ENCODE measurements at regions of chr16 and their contacts with region 1.

Region 1: DNA sequence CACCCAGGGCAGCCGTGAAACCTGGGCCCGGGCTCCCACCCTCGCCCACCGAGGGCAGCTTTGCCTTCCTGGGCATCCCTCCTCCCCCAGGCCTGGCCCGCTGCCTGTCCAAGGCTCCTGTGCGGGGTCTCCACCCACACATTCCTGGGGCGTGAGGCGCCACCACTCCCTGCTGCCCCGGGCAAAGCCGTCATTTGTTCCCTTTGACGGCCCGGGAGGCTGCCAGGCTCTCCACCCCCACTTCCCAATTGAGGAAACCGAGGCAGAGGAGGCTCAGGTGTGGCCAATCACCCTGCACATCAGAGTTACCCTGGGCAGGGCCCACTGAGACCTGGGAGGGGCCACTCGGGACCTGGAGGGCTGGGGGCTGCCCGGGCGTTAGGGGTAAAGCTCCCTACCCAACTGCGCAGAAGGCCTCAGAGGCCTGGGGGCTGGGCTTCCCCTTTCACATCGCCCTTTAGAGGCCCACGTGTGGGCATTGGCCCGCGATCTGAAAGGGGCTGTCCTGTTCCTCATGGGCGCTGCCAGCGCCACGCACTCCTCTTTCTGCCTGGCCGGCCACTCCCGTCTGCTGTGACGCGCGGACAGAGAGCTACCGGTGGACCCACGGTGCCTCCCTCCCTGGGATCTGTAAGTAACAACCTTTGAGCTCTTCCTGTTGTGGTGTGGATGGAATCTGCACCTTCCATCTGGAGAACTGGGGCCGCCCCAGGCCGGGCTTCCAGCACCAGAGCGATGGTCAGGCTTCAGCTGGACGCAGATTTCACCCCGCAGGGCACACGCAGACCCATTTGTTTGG is at the start of gene MSLN:
- DNase-seq: no peak
- ATAC-seq: peak; percentile 31
- H3K4me3 ChIP-seq: no peak within 1 kb of the TSS
- H3K27ac ChIP-seq: no peak within 1 kb of the TSS; the same call in 1 of the 2 replicates
- H3K4me1 ChIP-seq: peaks cover 18% of the 10 kb centered on the region
- H3K27me3 ChIP-seq: no peaks in the 10 kb centered on the region
- CTCF ChIP-seq: no peak
- total RNA-seq, gene MSLN: 1.1 TPM

Region 2: GRCh38 chr16:430904-431303 is 329.8 kb before region 1 on chr16:
- CTCF ChIA-PET with region 1: no interaction called
- POLR2A ChIA-PET with region 1: interaction called, 10 read pairs
- in situ Hi-C with region 1: no loop called
- intact Hi-C with region 1: no loop called
- DNase-seq: no peak
- ATAC-seq: no peak
- H3K4me3 ChIP-seq: no peak overlapping the region
- H3K27ac ChIP-seq: no peak overlapping the region
- H3K4me1 ChIP-seq: peaks cover 17% of the 10 kb centered on the region
- H3K27me3 ChIP-seq: no peaks in the 10 kb centered on the region
- CTCF ChIP-seq: no peak

Region 3: DNA sequence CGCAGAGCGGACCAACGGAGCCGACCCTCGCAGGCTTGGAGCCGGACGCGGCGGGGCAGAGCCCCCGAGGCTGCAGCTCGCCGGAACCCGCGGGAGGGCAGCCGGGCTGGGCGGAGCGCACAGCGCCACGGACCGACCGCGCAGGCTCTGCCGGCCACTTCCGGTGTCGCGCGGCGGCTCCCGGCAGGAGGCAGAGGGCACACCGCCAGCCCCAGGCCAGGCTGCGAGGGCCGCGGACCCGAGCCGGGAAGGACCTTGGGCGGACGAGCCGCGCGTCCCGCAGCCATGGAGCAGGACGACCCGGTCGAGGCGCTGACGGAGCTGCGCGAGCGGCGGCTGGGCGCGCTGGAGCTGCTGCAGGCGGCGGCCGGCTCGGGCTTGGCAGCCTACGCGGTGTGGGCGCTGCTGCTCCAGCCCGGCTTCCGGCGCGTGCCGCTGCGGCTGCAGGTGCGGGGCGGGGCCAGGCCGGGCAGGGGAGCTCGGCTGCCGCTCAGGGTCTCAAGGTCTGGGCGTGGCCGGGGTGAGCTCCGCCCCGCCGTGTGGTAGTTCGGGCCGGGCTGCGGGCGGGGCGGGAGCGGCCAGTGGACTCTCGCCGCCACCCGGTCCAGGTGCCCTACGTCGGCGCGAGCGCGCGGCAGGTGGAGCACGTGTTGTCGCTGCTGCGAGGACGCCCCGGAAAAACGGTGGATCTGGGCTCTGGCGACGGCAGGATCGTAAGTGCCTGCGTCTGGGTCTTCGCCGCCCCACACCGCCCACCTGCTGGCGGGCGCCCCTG is 39.6 kb before region 1 on chr16 and contains the start of gene ANTKMT:
- CTCF ChIA-PET with region 1: no interaction called
- POLR2A ChIA-PET with region 1: no interaction called
- in situ Hi-C with region 1: no loop called
- intact Hi-C with region 1: no loop called
- DNase-seq: no peak
- ATAC-seq: peak; percentile 70
- H3K4me3 ChIP-seq: peak within 1 kb of the TSS; percentile 72 to 77
- H3K27ac ChIP-seq: peak within 1 kb of the TSS; percentile 93
- H3K4me1 ChIP-seq: peaks cover 45% of the 10 kb centered on the region
- H3K27me3 ChIP-seq: no peaks in the 10 kb centered on the region
- CTCF ChIP-seq: no peak
- total RNA-seq, gene ANTKMT: 93.6 TPM

Region 4: DNA sequence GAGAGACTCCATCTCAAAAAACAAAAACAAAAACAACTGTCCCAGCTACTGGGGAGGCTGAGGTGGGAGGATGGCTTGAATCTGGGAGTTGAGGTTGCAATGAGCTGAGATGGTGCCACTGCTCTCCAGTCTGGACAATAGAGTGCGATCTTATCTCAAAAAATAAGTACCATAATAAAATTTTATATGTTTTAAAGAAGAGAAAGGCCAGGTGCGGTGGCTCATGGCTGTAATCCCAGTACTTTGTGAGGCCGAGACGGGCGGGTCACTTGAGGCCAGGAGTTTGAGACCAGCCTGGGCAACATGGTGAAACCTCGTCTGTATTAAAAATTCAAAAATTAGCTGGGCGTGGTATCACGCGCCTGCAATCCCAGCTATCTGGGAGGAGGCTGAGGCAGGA is 16.1 kb after region 1 on chr16:
- CTCF ChIA-PET with region 1: no interaction called
- POLR2A ChIA-PET with region 1: interaction called, 11 read pairs
- in situ Hi-C with region 1: no loop called
- intact Hi-C with region 1: no loop called
- DNase-seq: no peak
- ATAC-seq: no peak
- H3K4me3 ChIP-seq: no peak overlapping the region
- H3K27ac ChIP-seq: no peak overlapping the region
- H3K4me1 ChIP-seq: peaks cover 10% of the 10 kb centered on the region
- H3K27me3 ChIP-seq: no peaks in the 10 kb centered on the region
- CTCF ChIP-seq: no peak

Region 5: GRCh38 chr16:1188432-1189189 is 427.9 kb after region 1 on chr16:
- CTCF ChIA-PET with region 1: no interaction called
- POLR2A ChIA-PET with region 1: no interaction called
- in situ Hi-C with region 1: no loop called
- intact Hi-C with region 1: no loop called
- DNase-seq: no peak
- ATAC-seq: peak; percentile 42; the same call in 1 of the 2 replicates
- H3K4me3 ChIP-seq: no peak overlapping the region
- H3K27ac ChIP-seq: no peak overlapping the region
- H3K4me1 ChIP-seq: peaks cover 17% of the 10 kb centered on the region
- H3K27me3 ChIP-seq: no peaks in the 10 kb centered on the region
- CTCF ChIP-seq: no peak

Measured in Panc1 (cell line).